ENCODE measurements at regions of chr17 and their contacts with region 1.

Region 1: GRCh38 chr17:49556223-49556971 is 19.3 kb upstream of the NXPH3 start:
- DNase-seq: peak; percentile 87
- H3K4me3 Mint-ChIP-seq: no peak overlapping the region
- H3K27ac Mint-ChIP-seq: no peak overlapping the region
- H3K4me1 Mint-ChIP-seq: peaks cover 5% of the 10 kb centered on the region
- H3K27me3 Mint-ChIP-seq: peaks cover 2% of the 10 kb centered on the region

Region 2: GRCh38 chr17:49315551-49316257 is 240.7 kb before region 1 on chr17:
- CTCF ChIA-PET with region 1: no interaction called
- intact Hi-C with region 1: loop called (anchors 5 kb)
- DNase-seq: peak; percentile 91
- H3K4me3 Mint-ChIP-seq: peak overlapping the region; percentile 41
- H3K27ac Mint-ChIP-seq: peak overlapping the region; percentile 62
- H3K4me1 Mint-ChIP-seq: peaks cover 23% of the 10 kb centered on the region
- H3K27me3 Mint-ChIP-seq: no peaks in the 10 kb centered on the region

Region 3: DNA sequence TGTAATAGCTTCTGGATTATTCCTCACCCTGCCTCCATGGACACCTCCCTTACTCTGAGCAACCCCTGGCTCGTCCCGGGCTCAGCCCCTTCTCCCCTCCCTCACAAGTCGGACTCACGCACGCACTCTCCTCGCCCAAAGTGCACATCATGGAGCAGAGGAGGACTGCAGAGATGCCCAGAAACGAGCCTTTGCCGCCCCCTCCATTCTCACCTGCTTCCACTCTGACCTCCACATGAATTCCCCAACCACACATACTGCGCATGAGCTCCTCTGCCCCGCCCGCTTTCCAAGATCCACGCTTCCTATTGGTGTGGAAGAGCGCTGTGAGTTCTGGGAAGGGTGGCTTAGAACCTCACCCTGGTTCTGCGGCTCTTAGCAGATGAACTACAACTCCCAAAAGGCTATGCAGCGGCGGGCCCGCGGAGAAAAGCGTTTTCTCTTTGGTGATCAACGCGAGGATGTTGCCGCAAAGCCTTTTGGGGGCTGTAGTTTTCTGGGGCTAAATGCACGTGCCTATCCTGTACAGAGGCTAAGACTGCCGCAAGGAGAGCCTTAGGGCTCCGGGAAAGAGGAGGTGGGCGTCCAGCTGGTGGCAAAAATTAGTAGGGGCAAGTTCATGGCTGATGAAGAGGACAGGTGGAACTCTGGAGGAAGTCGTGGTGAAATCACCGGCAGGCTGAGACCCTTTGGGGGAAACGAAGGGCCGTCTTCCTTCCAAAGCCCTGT is 141.6 kb before region 1 on chr17 and contains the start of gene PHB1:
- CTCF ChIA-PET with region 1: interaction called, 14 read pairs
- intact Hi-C with region 1: no loop called
- DNase-seq: peak; percentile 99
- H3K4me3 Mint-ChIP-seq: peak within 1 kb of the TSS; percentile 100
- H3K27ac Mint-ChIP-seq: peak within 1 kb of the TSS; percentile 78
- H3K4me1 Mint-ChIP-seq: peaks cover 32% of the 10 kb centered on the region
- H3K27me3 Mint-ChIP-seq: no peaks in the 10 kb centered on the region
- total RNA-seq, gene PHB1: 390 to 404 TPM

Region 4: GRCh38 chr17:49496183-49496866 is 60.1 kb before region 1 on chr17:
- CTCF ChIA-PET with region 1: interaction called, 56 read pairs
- intact Hi-C with region 1: loop called (anchors 1 kb)
- DNase-seq: peak; percentile 84
- H3K4me3 Mint-ChIP-seq: peak overlapping the region; percentile 65
- H3K27ac Mint-ChIP-seq: no peak overlapping the region
- H3K4me1 Mint-ChIP-seq: peaks cover 19% of the 10 kb centered on the region
- H3K27me3 Mint-ChIP-seq: peaks cover 53% of the 10 kb centered on the region

Region 5: GRCh38 chr17:49567871-49568694 is 11.7 kb after region 1 on chr17:
- CTCF ChIA-PET with region 1: interaction called, 33 read pairs
- intact Hi-C with region 1: loop called (anchors 1 kb)
- DNase-seq: peak; percentile 89
- H3K4me3 Mint-ChIP-seq: peak overlapping the region; percentile 74
- H3K27ac Mint-ChIP-seq: no peak overlapping the region
- H3K4me1 Mint-ChIP-seq: peaks cover 15% of the 10 kb centered on the region
- H3K27me3 Mint-ChIP-seq: peaks cover 8% of the 10 kb centered on the region

Region 6: GRCh38 chr17:49585422-49586027 is 29.1 kb after region 1 on chr17:
- CTCF ChIA-PET with region 1: no interaction called
- intact Hi-C with region 1: no loop called
- DNase-seq: no peak
- H3K4me3 Mint-ChIP-seq: no peak overlapping the region
- H3K27ac Mint-ChIP-seq: no peak overlapping the region
- H3K4me1 Mint-ChIP-seq: no peaks in the 10 kb centered on the region
- H3K27me3 Mint-ChIP-seq: no peaks in the 10 kb centered on the region

Region 7: GRCh38 chr17:49624896-49625295 is 68.5 kb after region 1 on chr17:
- CTCF ChIA-PET with region 1: no interaction called
- intact Hi-C with region 1: no loop called
- DNase-seq: no peak
- H3K4me3 Mint-ChIP-seq: no peak overlapping the region
- H3K27ac Mint-ChIP-seq: no peak overlapping the region
- H3K4me1 Mint-ChIP-seq: peaks cover 29% of the 10 kb centered on the region
- H3K27me3 Mint-ChIP-seq: no peaks in the 10 kb centered on the region

Region 8: GRCh38 chr17:49699966-49700575 is 143.7 kb after region 1 on chr17:
- CTCF ChIA-PET with region 1: interaction called, 31 read pairs
- intact Hi-C with region 1: no loop called
- DNase-seq: no peak
- H3K4me3 Mint-ChIP-seq: no peak overlapping the region
- H3K27ac Mint-ChIP-seq: peak overlapping the region; percentile 4
- H3K4me1 Mint-ChIP-seq: peaks cover 24% of the 10 kb centered on the region
- H3K27me3 Mint-ChIP-seq: no peaks in the 10 kb centered on the region